Adrenal gland (tissue), 19 donors: ENCODE measurements at regions of chr5 and their contacts with region 1.

Region 1: GRCh38 chr5:154405078-154405792 is 40.6 kb upstream of the SAP30L start:
- DNase-seq: peak; percentile 74 to 88 (median 84)
- H3K4me3 ChIP-seq: peak overlapping the region in 1 of 4 donors; percentile 44
- H3K27ac ChIP-seq: no peak overlapping the region
- H3K4me1 ChIP-seq: peaks cover 0 to 9% of the 10 kb centered on the region in 2 donors
- H3K27me3 ChIP-seq: no peaks in the 10 kb centered on the region
- CTCF ChIP-seq: peak; percentile 72 to 95 (median 88)
- POLR2A ChIP-seq: no peak

Region 2: DNA sequence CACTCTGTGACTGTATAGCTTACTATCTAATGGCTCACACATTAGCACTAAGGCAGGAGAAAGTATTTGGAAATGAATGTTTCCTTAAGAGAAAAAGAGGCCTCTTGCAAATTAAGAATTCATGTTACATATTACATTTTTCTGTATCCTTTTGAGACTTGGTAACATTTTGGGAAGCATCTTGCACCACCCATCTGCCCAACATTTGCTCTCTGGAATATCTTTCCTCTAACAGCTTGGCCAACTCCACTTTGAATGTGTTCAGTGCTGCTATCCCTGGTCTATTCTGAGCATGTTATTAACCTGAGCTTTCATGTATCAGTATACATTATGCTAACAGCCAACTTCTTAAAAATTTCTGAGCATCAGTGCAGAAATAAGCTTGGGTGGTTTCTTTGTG is 339.3 kb before region 1 on chr5:
- intact Hi-C with region 1: loop called (anchors 5 kb)
- DNase-seq: no peak
- H3K4me3 ChIP-seq: no peak overlapping the region
- H3K27ac ChIP-seq: no peak overlapping the region
- H3K4me1 ChIP-seq: no peaks in the 10 kb centered on the region
- H3K27me3 ChIP-seq: no peaks in the 10 kb centered on the region
- CTCF ChIP-seq: no peak
- POLR2A ChIP-seq: no peak

Region 3: DNA sequence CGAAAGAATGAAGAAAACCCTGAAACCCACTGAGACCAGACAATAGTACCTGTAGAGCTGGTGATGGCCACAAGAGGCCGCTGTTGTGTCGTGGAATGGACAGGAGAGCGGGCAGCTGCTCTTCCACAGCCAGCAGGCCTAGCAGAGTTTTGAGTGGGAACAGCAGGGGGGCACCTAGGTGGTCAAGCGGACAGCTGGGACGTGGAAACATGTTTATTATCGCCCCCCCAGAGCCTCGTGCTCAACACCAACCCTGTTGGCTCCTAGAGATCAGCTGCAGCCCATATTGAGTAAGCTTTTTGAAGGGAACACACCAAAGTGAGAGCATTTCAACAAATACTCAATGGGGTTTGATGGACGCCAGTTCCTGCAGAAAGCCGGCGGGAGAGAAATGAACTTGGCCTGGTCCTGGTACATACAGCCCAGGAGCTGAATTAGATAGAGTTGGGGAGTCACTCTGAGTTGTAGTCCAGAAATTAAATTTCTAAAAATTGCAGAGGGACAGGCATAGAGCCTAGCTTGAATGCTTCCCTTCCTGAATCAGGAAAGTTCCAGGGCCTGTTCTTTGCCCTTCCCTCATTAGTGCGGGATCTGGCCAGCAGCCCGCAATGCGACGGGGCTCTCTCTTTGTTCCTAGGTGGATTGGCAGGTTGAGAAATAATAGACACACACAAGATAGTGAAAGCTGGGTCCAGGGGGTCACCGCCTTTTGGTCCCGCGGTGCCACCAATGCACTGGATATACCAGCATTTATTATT is 332.6 kb before region 1 on chr5:
- intact Hi-C with region 1: loop called (anchors 5 kb)
- DNase-seq: peak; percentile 68 to 92 (median 84)
- H3K4me3 ChIP-seq: no peak overlapping the region
- H3K27ac ChIP-seq: no peak overlapping the region
- H3K4me1 ChIP-seq: peaks cover 6 to 8% of the 10 kb centered on the region in 2 donors
- H3K27me3 ChIP-seq: no peaks in the 10 kb centered on the region
- CTCF ChIP-seq: peak; percentile 86 to 98 (median 95)
- POLR2A ChIP-seq: no peak

Region 4: DNA sequence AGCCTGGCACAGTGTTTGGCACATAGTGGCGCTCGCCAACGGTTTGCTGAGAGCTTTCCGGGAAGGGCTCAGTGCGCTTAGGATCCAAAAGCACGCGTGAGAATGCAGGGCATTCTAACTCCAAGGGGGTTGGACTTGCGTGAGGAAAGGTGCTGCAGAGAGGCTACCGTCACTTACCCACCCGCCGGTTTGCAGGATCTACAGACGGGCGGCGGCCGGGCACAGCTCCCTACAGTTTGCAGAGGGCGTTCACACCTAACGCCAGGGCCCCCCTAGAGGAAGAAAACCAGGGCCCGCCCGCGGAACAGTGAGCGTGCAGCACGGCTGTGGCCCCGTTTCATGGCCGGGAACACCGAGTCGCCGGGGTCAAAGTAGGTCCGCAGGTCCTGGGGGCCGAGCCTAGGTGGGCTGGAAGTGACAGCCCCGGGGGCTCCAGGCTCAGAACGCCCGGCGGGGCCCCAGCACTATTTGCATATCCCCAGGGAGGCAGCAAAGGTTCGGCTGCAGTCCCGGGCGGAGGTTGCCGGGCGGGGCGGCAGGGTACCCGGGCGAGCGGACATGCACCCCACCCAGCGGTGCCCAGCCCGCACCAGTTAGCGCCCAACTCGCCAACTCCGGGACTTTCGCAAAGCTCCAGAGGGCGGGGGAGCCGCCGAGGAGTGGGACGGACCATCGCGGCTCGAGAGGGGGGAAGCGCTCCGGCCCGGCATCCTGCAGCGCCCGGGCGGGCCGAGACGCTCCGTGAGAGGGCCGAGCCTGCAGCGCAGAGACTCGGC is 215.2 kb before region 1 on chr5:
- intact Hi-C with region 1: loop called in 1 of 2 experiments (anchors 5 kb)
- DNase-seq: peak; percentile 86 to 90 (median 89)
- H3K4me3 ChIP-seq: peak overlapping the region in 3 of 4 donors; percentile 44 to 85 (median 79)
- H3K27ac ChIP-seq: peak overlapping the region; percentile 10 to 97 (median 55)
- H3K4me1 ChIP-seq: peaks cover 21 to 38% of the 10 kb centered on the region in 2 donors
- H3K27me3 ChIP-seq: no peaks in the 10 kb centered on the region
- CTCF ChIP-seq: peak; percentile 7 to 43 (median 32)
- POLR2A ChIP-seq: peak in 1 of 2 donors; percentile 56

Region 5: DNA sequence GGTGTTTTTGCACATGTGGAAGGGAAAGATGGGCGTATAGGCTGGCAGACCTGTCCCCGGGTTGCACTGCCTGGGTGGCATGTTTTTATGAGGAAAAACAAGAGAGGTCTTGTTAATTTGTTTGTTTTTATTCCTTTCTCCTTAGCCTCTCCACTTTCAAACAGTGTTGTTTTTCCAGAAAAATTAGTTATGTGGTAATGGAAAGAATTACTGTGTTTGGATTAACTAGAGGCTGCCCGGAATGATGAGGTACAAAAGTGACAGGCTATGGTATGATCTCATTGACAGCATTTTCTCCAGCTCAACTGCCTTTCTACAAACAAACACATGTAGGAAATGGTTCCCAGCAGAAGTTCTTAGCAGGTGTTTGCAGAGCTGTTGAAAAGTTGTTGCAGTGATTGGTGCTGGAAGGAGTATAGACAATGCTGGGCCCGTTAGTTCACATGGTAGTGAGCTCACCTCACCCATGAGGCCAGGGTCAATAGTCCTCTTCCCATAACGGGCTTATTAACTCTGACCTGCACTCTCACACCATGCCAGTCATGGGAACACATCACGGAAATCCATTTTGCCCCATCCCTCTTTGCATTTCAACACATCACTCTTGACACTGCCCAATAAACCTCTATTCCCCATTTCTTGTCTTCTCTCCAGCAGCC is 70.7 kb before region 1 on chr5:
- intact Hi-C with region 1: no loop called
- DNase-seq: no peak
- H3K4me3 ChIP-seq: no peak overlapping the region
- H3K27ac ChIP-seq: no peak overlapping the region
- H3K4me1 ChIP-seq: no peaks in the 10 kb centered on the region
- H3K27me3 ChIP-seq: no peaks in the 10 kb centered on the region
- CTCF ChIP-seq: no peak
- POLR2A ChIP-seq: no peak

Region 6: DNA sequence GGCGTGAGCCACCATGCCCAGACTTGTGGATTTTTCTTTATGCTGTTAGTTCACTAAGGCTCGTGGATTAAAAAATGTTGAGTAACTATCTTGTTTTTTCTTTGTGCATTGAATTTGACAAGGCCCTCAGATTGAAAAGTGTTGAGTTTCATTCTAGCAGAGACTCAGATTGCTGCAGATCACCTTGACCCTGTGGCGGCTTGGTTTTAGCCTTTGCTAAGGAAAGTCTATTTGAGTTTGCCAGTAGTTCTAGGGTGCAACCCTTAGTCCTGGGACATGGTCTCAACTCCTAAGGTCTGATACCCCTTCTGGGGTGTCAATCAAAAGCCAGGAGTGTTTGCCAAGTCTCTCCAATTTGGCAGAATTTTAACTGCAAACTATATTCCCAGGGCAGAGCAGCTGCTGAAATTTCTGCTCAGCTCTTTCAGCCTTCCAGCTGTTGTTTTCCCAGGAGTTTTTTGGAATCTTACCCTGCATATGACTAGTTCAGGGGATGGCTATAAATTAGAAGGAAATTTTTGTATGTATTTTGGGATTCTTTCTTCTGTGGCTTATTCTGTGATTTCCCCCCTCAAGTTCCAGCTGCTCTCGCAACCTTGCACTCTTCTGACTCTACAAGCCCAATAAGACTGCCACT is 157.1 kb after region 1 on chr5:
- intact Hi-C with region 1: no loop called
- DNase-seq: no peak
- H3K4me3 ChIP-seq: no peak overlapping the region
- H3K27ac ChIP-seq: no peak overlapping the region
- H3K4me1 ChIP-seq: no peaks in the 10 kb centered on the region
- H3K27me3 ChIP-seq: peaks cover 3% of the 10 kb centered on the region
- CTCF ChIP-seq: no peak
- POLR2A ChIP-seq: no peak